ENCODE measurements at regions of chr15 and their contacts with region 1.

Region 1: DNA sequence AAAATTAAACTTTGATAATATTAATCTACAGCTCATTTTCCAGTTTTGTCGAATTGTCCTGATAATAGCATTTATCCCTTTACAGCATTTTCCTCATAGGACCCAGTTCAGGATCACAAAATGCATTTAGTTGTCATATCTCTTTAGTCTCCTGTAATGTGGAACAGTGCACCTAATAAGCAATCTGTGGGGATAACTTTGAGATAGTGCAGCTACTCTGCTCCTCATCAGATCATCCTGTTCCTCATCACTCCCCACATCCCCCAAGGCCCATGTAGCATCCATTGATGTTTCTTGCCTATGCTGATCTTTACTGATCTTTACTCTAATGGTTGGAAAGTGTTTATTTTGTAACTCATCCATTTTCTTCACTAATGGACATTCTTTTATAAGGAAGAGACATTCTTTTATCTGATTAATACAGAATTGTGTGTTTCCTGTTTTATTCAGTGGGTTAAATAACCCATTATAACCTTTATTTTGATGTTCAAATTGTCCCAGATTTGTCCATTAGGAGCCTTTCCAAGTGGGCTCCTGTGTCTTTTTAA is 7.5 kb downstream of the RNF111 start:
- DNase-seq: no peak
- H3K4me3 ChIP-seq: no peak overlapping the region
- H3K27ac ChIP-seq: no peak overlapping the region
- H3K4me1 ChIP-seq: peaks cover 0 to 19% (median 3%) of the 10 kb centered on the region in 4 donors
- H3K27me3 ChIP-seq: no peaks in the 10 kb centered on the region
- CTCF ChIP-seq: no peak

Region 2: DNA sequence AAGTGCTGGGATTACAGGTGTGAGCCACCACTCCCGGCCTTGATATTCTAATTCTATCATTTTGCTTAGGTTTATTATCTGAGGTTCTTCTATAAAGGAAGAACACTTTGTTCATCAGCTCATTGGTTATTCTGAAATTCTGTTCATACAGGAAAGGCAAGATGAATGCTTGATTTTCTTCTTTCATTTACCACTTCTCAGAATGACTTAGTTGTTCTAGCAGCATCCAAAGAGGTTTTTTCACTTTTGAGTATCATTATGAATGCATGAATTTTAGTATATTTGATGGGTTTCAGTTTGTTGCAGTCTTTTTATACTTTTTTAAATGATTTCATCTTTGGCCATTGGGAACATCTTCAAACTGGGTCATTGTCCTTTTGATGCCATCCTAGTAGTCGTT is 44.2 kb after region 1 on chr15:
- intact Hi-C with region 1: loop called (anchors 5 kb)
- DNase-seq: no peak
- H3K4me3 ChIP-seq: no peak overlapping the region
- H3K27ac ChIP-seq: no peak overlapping the region
- H3K4me1 ChIP-seq: peaks cover 0 to 12% (median 6%) of the 10 kb centered on the region in 4 donors
- H3K27me3 ChIP-seq: no peaks in the 10 kb centered on the region
- CTCF ChIP-seq: no peak

Region 3: DNA sequence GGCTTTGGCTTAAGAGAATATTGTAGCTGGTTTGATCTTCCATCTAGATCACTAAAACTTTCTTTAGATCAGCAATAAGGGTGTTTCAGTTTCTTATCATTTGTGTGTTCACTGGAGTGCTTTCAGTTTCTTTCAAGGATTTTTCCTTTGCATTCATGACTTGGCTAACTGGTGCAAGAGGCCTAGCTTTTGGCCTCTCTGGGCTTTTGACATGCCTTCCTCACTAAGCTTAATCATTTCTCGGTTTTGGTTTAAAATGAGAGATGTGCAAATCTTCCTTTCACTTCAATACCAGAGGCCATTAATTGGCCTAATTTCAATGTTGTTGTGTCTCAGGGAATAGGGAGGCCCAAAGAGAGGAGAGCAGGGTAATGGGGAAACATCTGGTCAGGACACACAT is 79.6 kb after region 1 on chr15:
- intact Hi-C with region 1: no loop called
- DNase-seq: no peak
- H3K4me3 ChIP-seq: no peak overlapping the region
- H3K27ac ChIP-seq: no peak overlapping the region
- H3K4me1 ChIP-seq: no peaks in the 10 kb centered on the region
- H3K27me3 ChIP-seq: no peaks in the 10 kb centered on the region
- CTCF ChIP-seq: no peak

Region 4: GRCh38 chr15:59662260-59662659 is 667.3 kb after region 1 on chr15:
- intact Hi-C with region 1: loop called (anchors 5 kb)
- DNase-seq: no peak
- H3K4me3 ChIP-seq: no peak overlapping the region
- H3K27ac ChIP-seq: no peak overlapping the region
- H3K4me1 ChIP-seq: peaks cover 0 to 4% (median 0%) of the 10 kb centered on the region in 4 donors
- H3K27me3 ChIP-seq: no peaks in the 10 kb centered on the region
- CTCF ChIP-seq: no peak